CD8-positive, alpha-beta T cell (primary cell): ENCODE measurements at regions of chr3 and their contacts with region 1.

Region 1: GRCh38 chr3:12796171-12797123 is at the start of gene CAND2:
- DNase-seq: peak in 7 of 9 experiments; percentile 15 to 66 (median 43)
- ATAC-seq: peak; percentile 86
- H3K4me3 ChIP-seq: peak within 1 kb of the TSS; percentile 65 to 67
- H3K4me3 Mint-ChIP-seq: peak within 1 kb of the TSS; percentile 87
- H3K27ac ChIP-seq: no peak within 1 kb of the TSS
- H3K27ac Mint-ChIP-seq: peak within 1 kb of the TSS; percentile 32
- H3K4me1 ChIP-seq: peaks cover 6% of the 10 kb centered on the region
- H3K4me1 Mint-ChIP-seq: peaks cover 16% of the 10 kb centered on the region
- H3K27me3 ChIP-seq: no peaks in the 10 kb centered on the region
- H3K27me3 Mint-ChIP-seq: peaks cover 3% of the 10 kb centered on the region
- CTCF ChIP-seq: no peak
- total RNA-seq, gene CAND2: 0.92 to 1.1 TPM

Region 2: GRCh38 chr3:12518261-12519028 is 278.0 kb before region 1 on chr3:
- CTCF ChIA-PET with region 1: no interaction called
- POLR2A ChIA-PET with region 1: no interaction called
- intact Hi-C with region 1: no loop called
- DNase-seq: no peak
- ATAC-seq: no peak
- H3K4me3 ChIP-seq: no peak overlapping the region
- H3K4me3 Mint-ChIP-seq: no peak overlapping the region
- H3K27ac ChIP-seq: no peak overlapping the region
- H3K27ac Mint-ChIP-seq: no peak overlapping the region
- H3K4me1 ChIP-seq: no peaks in the 10 kb centered on the region
- H3K4me1 Mint-ChIP-seq: no peaks in the 10 kb centered on the region
- H3K27me3 ChIP-seq: no peaks in the 10 kb centered on the region
- H3K27me3 Mint-ChIP-seq: no peaks in the 10 kb centered on the region
- CTCF ChIP-seq: no peak

Region 3: DNA sequence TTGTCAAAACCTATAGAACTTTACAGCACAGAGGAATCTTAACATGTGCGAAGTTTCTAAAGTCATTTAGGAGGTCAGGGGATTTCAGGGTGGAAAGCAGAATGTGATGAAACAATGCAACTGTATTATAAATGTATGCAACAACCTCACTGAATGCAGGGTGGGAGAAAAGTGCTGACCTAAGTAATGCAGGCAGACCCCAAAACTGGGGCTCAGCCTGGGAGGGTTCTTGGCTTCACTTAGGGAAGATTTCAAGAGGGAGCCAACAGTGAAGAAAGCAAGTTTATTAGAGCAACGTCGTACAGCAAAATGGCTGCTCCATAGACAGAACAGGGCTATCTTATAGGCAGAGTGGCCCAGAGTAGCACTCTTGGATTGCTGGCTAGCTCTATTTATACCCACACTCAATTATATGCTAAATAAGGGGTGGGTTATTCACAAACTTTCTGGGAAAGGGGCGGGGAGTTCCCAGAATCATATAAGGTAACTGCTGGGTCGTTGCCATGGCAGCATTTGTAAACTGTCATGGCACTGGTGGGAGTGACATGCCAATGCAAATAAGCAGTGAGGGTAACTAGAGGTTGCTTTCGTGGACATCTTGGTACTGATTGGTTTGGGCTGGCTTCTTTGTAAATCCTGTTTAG is 14.2 kb before region 1 on chr3:
- CTCF ChIA-PET with region 1: interaction called, 10 read pairs
- POLR2A ChIA-PET with region 1: no interaction called
- intact Hi-C with region 1: no loop called
- DNase-seq: peak in 1 of 9 experiments; percentile 24
- ATAC-seq: no peak
- H3K4me3 ChIP-seq: no peak overlapping the region
- H3K4me3 Mint-ChIP-seq: no peak overlapping the region
- H3K27ac ChIP-seq: no peak overlapping the region
- H3K27ac Mint-ChIP-seq: no peak overlapping the region
- H3K4me1 ChIP-seq: no peaks in the 10 kb centered on the region
- H3K4me1 Mint-ChIP-seq: no peaks in the 10 kb centered on the region
- H3K27me3 ChIP-seq: peaks cover 0 to 3% of the 10 kb centered on the region in 2 experiments
- H3K27me3 Mint-ChIP-seq: peaks cover 26% of the 10 kb centered on the region
- CTCF ChIP-seq: no peak

Region 4: GRCh38 chr3:13022348-13023234 is 226.1 kb after region 1 on chr3:
- CTCF ChIA-PET with region 1: no interaction called
- POLR2A ChIA-PET with region 1: no interaction called
- intact Hi-C with region 1: no loop called
- DNase-seq: no peak
- ATAC-seq: no peak
- H3K4me3 ChIP-seq: no peak overlapping the region
- H3K4me3 Mint-ChIP-seq: no peak overlapping the region
- H3K27ac ChIP-seq: no peak overlapping the region
- H3K27ac Mint-ChIP-seq: no peak overlapping the region
- H3K4me1 ChIP-seq: no peaks in the 10 kb centered on the region
- H3K4me1 Mint-ChIP-seq: peaks cover 2% of the 10 kb centered on the region
- H3K27me3 ChIP-seq: no peaks in the 10 kb centered on the region
- H3K27me3 Mint-ChIP-seq: no peaks in the 10 kb centered on the region
- CTCF ChIP-seq: no peak